Prostate gland (tissue), 2 donors: ENCODE measurements at regions of chr9 and their contacts with region 1.

Region 1: GRCh38 chr9:110623462-110624025 is 44.0 kb upstream of the SVEP1 start:
- DNase-seq: peak; percentile 49
- H3K4me3 ChIP-seq: no peak overlapping the region
- H3K27ac ChIP-seq: no peak overlapping the region
- H3K4me1 ChIP-seq: no peaks in the 10 kb centered on the region
- H3K27me3 ChIP-seq: no peaks in the 10 kb centered on the region
- CTCF ChIP-seq: peak; percentile 44 to 81 (median 70)
- POLR2A ChIP-seq: no peak

Region 2: DNA sequence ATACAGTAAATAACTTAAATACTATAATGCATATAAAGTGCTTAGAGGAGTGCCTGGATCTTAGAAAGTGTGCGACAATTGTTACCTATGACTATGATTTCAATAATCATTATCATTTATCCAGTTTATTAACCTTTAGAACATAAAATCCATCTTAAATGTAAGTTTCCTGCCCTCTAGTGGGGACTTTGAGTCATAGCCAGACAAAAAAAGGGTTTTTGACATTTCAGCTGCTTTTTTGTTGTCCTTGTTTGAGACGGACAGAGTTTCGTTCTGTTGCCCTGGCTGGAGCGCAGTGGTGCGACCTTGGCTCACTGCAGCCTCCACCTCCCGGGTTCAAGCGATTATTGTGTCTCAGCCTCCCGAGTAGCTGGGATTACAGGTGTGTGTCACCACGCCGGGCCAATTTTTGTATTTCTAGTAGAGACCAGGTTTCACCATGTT is 405.9 kb before region 1 on chr9:
- intact Hi-C with region 1: no loop called
- DNase-seq: peak; percentile 14
- H3K4me3 ChIP-seq: no peak overlapping the region
- H3K27ac ChIP-seq: no peak overlapping the region
- H3K4me1 ChIP-seq: no peaks in the 10 kb centered on the region
- H3K27me3 ChIP-seq: no peaks in the 10 kb centered on the region
- CTCF ChIP-seq: peak; percentile 69 to 89 (median 81)
- POLR2A ChIP-seq: no peak

Region 3: DNA sequence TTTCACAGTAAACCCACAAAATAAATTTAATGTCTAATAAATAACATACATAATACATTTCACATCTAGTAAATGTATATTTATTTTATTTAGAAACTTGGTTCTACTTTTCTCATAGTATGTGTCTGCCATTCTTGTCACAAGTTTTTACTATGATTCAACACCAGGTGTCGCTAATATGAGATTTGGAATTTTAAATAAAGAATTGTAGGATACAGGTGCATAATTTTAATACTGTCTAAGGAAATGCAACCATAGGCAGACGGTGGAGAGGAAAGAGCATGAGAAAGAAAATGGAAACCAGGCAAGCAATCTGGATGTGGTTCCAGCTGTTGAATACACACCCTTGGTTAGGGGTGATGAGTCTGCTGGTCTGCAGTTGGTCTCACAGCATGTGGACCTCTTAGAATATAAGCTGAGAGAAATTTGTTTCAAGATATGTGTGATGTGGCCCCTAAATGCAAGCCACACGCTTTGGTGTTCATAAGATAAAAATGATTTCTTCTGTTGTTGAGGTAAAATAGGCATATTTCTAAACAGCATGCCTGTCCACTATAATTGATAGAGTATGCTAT is 171.2 kb before region 1 on chr9:
- intact Hi-C with region 1: loop called (anchors 5 kb)
- DNase-seq: no peak
- H3K4me3 ChIP-seq: no peak overlapping the region
- H3K27ac ChIP-seq: no peak overlapping the region
- H3K4me1 ChIP-seq: no peaks in the 10 kb centered on the region
- H3K27me3 ChIP-seq: no peaks in the 10 kb centered on the region
- CTCF ChIP-seq: peak in 3 of 4 experiments; percentile 41 to 48 (median 42)
- POLR2A ChIP-seq: no peak